Activated B cell treated with CpG ODN at 0.5 μM for 24 hours (primary cell): ENCODE measurements at regions of chr1 and their contacts with region 1.

Region 1: DNA sequence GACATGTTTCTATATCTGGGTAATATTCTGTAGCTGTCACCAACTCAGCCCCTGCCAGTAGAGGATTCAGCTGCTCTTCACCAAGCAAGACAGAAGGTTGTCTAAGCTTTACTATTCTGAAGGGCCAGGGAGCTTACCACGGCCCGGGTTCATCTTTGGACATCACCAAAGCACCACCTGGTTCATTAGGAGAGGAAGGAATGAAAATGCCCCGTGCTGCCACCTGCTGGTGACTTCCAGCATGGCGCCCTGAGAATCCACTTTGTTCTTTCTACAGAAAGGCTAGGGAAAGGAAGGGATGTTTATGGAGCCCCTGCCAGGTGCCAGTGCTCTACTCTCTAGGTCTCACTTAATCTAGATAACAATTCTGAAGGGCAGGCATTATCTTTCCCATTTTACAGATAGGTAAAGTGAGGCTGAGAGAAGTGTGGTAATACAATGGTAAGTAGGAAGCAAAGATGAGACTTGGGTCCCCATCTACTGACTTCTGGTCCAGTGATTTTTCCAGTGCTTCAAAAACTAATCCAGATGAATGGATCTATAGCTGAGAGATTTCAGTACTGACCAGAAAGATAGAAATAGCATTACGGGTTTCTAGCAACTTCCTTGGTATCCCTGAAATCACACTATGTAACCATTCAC is 79.5 kb downstream of the BEND5 start:
- DNase-seq: peak; percentile 50
- ATAC-seq: no peak
- H3K4me3 Mint-ChIP-seq: no peak overlapping the region
- H3K27ac Mint-ChIP-seq: no peak overlapping the region
- H3K4me1 Mint-ChIP-seq: no peaks in the 10 kb centered on the region
- H3K27me3 Mint-ChIP-seq: peaks cover 3% of the 10 kb centered on the region
- CTCF ChIP-seq: peak; percentile 80

Region 2: DNA sequence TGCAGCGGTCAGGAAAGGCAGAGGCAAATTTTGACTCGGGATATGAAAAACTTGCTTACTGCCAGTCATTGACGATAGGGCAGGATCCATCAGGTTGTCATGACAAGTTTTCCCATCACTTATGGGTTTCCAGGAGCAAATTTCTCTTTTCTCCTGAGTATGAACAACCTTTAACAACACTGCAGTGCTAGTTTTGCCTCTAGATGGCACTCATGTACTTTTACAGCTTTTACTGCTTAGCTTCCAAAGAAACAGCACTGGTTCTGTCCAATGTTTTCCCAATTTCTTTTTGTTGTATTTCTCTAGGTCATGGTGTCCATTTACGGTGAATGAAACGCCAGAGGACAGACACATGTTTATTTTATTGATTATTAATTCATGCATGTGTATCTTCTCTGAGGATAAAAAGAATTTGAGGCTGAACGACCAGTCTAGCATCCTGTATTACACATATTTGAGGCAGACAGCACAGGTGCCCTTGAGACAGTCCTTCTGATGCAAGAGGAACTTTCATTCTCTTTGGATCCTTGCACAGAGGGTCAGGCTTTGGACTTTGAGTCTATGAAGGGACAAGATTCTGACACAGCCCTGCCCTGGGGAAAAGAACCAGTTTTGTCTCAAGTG is 587.7 kb before region 1 on chr1:
- CTCF ChIA-PET with region 1: no interaction called
- POLR2A ChIA-PET with region 1: no interaction called
- intact Hi-C with region 1: loop called (anchors 5 kb)
- DNase-seq: no peak
- ATAC-seq: no peak
- H3K4me3 Mint-ChIP-seq: no peak overlapping the region
- H3K27ac Mint-ChIP-seq: no peak overlapping the region
- H3K4me1 Mint-ChIP-seq: no peaks in the 10 kb centered on the region
- H3K27me3 Mint-ChIP-seq: peaks cover 5% of the 10 kb centered on the region
- CTCF ChIP-seq: peak; percentile 25

Region 3: DNA sequence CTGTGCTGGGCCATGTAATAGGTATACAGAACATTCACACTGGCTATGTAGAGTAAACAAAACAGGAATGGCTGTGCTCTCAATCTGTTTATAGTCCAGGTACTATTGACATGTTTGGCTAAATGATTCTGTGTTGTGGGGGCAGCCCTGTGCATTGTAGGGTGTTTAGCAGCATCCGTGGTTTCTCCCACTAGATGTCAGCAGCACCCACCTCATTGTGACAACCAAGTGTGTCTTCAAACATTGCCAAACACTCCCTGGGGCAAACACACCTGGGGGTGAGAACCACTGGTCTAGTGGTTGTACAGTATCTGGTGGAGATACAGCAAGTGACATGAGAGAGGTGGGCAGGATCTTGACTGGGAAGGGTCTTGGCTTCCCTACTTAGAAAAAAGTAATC is 144.8 kb before region 1 on chr1:
- CTCF ChIA-PET with region 1: no interaction called
- POLR2A ChIA-PET with region 1: no interaction called
- intact Hi-C with region 1: loop called (anchors 5 kb)
- DNase-seq: no peak
- ATAC-seq: no peak
- H3K4me3 Mint-ChIP-seq: no peak overlapping the region
- H3K27ac Mint-ChIP-seq: no peak overlapping the region
- H3K4me1 Mint-ChIP-seq: no peaks in the 10 kb centered on the region
- H3K27me3 Mint-ChIP-seq: no peaks in the 10 kb centered on the region
- CTCF ChIP-seq: no peak

Region 4: DNA sequence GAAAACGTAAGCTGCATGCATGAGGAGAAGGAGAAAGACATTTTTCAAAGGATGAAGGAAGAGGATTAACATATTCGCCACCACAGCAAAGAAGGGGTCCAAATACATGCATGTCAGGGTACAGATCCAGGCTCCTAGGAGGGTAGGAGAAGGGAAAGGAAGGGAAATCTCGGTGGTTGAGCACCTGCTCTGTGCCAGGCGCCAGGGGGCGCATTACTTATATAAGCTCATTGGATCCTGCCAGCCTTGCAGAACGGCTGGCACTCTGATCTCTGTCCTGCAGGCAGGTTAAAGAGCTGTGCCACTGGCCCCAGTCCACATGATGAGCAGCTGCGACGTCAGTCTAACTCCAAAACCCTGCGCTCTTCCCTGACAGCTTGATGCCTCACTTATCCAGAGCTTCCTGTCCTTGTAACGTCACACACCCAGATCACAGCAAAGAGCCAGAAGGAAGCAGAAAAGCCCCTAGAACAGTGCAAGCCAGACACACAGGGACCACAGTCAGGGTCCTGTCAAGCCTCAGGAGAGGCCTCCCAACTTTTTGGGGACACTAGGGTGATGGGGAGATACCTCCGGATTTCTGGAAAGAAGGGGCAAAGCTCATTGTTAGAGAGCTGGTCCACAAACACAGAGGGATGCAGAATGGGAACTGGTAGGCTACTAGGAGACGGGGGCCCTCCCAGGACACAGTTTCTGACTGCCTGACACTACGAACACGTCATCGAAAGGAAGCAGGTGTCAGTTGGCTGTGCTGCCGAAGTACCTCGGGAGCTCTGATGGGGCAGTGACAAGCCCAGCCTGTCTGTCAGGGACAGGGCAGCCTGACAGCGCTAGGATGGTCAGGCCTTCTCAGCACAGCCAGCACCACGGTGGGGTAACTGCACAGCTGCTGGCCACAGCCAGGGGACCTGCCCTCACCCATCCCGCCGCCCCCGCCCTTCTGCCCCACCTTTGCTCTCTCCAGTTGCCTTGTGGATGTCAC is 19.6 kb before region 1 on chr1:
- CTCF ChIA-PET with region 1: interaction called, 22 read pairs
- POLR2A ChIA-PET with region 1: no interaction called
- intact Hi-C with region 1: no loop called
- DNase-seq: peak; percentile 31
- ATAC-seq: peak; percentile 68
- H3K4me3 Mint-ChIP-seq: no peak overlapping the region
- H3K27ac Mint-ChIP-seq: no peak overlapping the region
- H3K4me1 Mint-ChIP-seq: peaks cover 8% of the 10 kb centered on the region
- H3K27me3 Mint-ChIP-seq: peaks cover 18% of the 10 kb centered on the region
- CTCF ChIP-seq: peak; percentile 68

Region 5: GRCh38 chr1:49448200-49448599 is 751.0 kb after region 1 on chr1:
- CTCF ChIA-PET with region 1: no interaction called
- POLR2A ChIA-PET with region 1: no interaction called
- intact Hi-C with region 1: no loop called
- DNase-seq: no peak
- ATAC-seq: no peak
- H3K4me3 Mint-ChIP-seq: no peak overlapping the region
- H3K27ac Mint-ChIP-seq: no peak overlapping the region
- H3K4me1 Mint-ChIP-seq: no peaks in the 10 kb centered on the region
- H3K27me3 Mint-ChIP-seq: no peaks in the 10 kb centered on the region
- CTCF ChIP-seq: no peak